ENCODE measurements at regions of chr15 and their contacts with region 1.

Region 1: DNA sequence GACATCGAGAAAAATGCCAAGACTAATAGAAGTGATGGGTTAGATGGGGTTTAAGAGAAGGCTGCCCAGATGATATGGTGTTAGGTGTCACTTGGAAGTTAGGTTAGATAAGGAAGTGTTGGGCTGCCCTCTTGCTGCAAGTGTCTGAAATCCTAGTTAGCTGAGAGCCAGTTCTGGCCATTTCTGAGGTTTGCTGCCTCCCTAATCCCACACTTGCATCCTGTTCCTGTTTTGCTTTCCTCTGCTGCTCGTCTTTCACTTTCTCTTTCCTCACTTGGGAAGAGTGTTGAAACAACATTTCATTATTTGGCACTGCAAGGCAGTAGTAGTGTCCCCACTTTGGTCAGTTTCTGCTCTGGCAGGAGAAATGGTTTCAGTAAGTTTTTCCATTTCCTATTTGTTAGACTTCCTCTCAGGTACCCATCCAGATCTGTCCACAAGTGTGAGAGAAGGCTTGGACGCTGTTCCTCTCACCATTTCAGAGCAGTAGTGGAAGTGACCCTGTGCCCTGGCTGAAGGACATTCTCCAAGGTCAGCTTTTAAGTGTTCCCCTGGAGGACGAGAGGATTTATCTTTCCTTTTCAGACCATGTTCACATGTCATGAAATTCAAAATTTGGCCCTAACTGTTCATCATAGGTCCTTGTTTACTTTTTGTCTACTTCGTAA is 93.3 kb downstream of the ADAMTSL3 start:
- DNase-seq: no peak
- H3K4me3 ChIP-seq: peak overlapping the region; percentile 18 to 40 (median 24)
- H3K27ac ChIP-seq: peak overlapping the region; percentile 61 to 81 (median 68)
- H3K4me1 ChIP-seq: peaks cover 11 to 20% (median 18%) of the 10 kb centered on the region in 4 donors
- H3K27me3 ChIP-seq: no peaks in the 10 kb centered on the region
- CTCF ChIP-seq: peak; percentile 50 to 54 (median 51)
- EP300 ChIP-seq: no peak
- POLR2A ChIP-seq: no peak

Region 2: GRCh38 chr15:83446904-83447709 is 300.1 kb before region 1 on chr15 and contains the start of gene SH3GL3:
- intact Hi-C with region 1: loop called (anchors 5 kb)
- DNase-seq: peak; percentile 95
- H3K4me3 ChIP-seq: peak within 1 kb of the TSS; percentile 58 to 65 (median 59)
- H3K27ac ChIP-seq: no peak within 1 kb of the TSS
- H3K4me1 ChIP-seq: peaks cover 8 to 19% (median 18%) of the 10 kb centered on the region in 4 donors
- H3K27me3 ChIP-seq: peaks cover 0 to 47% (median 0%) of the 10 kb centered on the region in 4 donors
- CTCF ChIP-seq: peak; percentile 15 to 32 (median 19)
- EP300 ChIP-seq: no peak
- POLR2A ChIP-seq: no peak
- total RNA-seq, gene SH3GL3: 0.19 TPM in 1 of 4 donors, not detected in the others

Region 3: GRCh38 chr15:83571820-83572707 is 175.1 kb before region 1 on chr15:
- intact Hi-C with region 1: loop called (anchors 5 kb)
- DNase-seq: no peak
- H3K4me3 ChIP-seq: no peak overlapping the region
- H3K27ac ChIP-seq: no peak overlapping the region
- H3K4me1 ChIP-seq: no peaks in the 10 kb centered on the region
- H3K27me3 ChIP-seq: no peaks in the 10 kb centered on the region
- CTCF ChIP-seq: peak; percentile 53 to 71 (median 57)
- EP300 ChIP-seq: no peak
- POLR2A ChIP-seq: no peak

Region 4: GRCh38 chr15:83653639-83654378 is 93.4 kb before region 1 on chr15 and contains the start of gene ADAMTSL3:
- intact Hi-C with region 1: loop called (anchors 10 kb)
- DNase-seq: peak; percentile 93
- H3K4me3 ChIP-seq: peak within 1 kb of the TSS; percentile 63 to 73 (median 68)
- H3K27ac ChIP-seq: peak within 1 kb of the TSS; percentile 75 to 88 (median 78)
- H3K4me1 ChIP-seq: peaks cover 23 to 63% (median 53%) of the 10 kb centered on the region in 4 donors
- H3K27me3 ChIP-seq: peaks cover 0 to 21% (median 0%) of the 10 kb centered on the region in 4 donors
- CTCF ChIP-seq: peak; percentile 11 to 37 (median 18)
- EP300 ChIP-seq: no peak
- POLR2A ChIP-seq: no peak
- total RNA-seq, gene ADAMTSL3: 16.6 to 30.0 (median 21.8) TPM

Region 5: GRCh38 chr15:84023636-84024035 is 276.5 kb after region 1 on chr15:
- intact Hi-C with region 1: loop called (anchors 10 kb)
- DNase-seq: peak; percentile 31
- H3K4me3 ChIP-seq: no peak overlapping the region
- H3K27ac ChIP-seq: no peak overlapping the region
- H3K4me1 ChIP-seq: no peaks in the 10 kb centered on the region
- H3K27me3 ChIP-seq: no peaks in the 10 kb centered on the region
- CTCF ChIP-seq: peak; percentile 48 to 64 (median 55)
- EP300 ChIP-seq: no peak
- POLR2A ChIP-seq: no peak

Measured in esophagus muscularis mucosa (tissue), 4 donors.